Posterior cingulate gyrus (tissue), 11 donors: ENCODE measurements at regions of chr14 and their contacts with region 1.

Region 1: GRCh38 chr14:104665657-104666522 is 23.5 kb upstream of the INF2 start:
- DNase-seq: peak; percentile 74 to 99 (median 92)

Region 2: DNA sequence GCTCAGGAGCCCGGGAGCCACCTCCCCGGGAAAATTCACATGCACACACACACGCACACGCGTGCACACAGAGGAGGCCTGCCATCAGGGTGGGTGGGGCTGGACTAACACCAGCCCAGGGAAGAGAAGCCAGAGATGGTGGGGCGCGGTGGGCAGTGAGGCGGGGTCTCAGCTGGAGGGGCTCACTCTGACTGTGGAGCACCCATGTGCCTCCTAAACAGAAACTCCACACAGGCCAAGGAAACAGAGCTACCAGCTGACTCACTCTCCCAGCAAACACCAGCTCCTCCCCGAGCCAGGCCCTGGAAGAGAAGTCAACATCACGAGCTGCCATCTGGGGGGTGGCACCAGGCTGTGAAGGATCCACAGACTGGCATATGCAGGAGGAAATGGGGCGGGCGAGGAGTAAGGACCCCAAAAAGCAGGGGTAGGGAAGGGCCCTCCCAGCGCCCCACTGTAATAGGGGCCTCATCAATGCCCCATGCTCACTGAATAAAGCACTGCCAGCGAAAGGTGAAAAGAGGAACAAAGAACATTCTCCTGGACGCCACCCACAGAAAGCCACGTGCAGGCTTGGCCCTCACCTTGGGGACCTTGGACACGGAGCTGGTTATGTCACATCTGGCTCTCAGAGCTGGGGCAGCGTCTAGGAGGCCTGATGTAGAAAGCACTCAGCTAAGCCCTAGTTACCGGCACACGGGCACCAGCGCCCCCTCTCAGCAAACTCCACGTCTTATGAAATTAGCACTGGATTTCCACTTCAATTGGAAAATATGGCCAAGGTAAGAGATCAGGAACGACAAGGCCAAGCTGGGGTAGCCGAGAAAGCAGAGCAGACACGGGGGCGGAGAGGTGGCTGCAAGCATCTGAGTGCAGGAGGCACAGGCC is 15.2 kb after region 1 on chr14:
- intact Hi-C with region 1: loop called (anchors 1 kb)
- DNase-seq: peak; percentile 76 to 97 (median 86)